ENCODE measurements at regions of chr14 and their contacts with region 1.

Region 1: GRCh38 chr14:54175298-54175942 is 218.8 kb upstream of the BMP4 start:
- DNase-seq: peak; percentile 89
- ATAC-seq: peak; percentile 78
- H3K4me3 ChIP-seq: no peak overlapping the region; a peak in 1 of 6 replicates
- H3K27ac ChIP-seq: peak overlapping the region; percentile 61
- H3K4me1 ChIP-seq: peaks cover 64% of the 10 kb centered on the region
- H3K27me3 ChIP-seq: no peaks in the 10 kb centered on the region
- CTCF ChIP-seq: peak; percentile 85
- EP300 ChIP-seq: peak in 1 of 2 experiments; percentile 59; a peak in 2 of 4 replicates
- POLR2A ChIP-seq: no peak
- RAD21 ChIP-seq: peak; percentile 85

Region 2: DNA sequence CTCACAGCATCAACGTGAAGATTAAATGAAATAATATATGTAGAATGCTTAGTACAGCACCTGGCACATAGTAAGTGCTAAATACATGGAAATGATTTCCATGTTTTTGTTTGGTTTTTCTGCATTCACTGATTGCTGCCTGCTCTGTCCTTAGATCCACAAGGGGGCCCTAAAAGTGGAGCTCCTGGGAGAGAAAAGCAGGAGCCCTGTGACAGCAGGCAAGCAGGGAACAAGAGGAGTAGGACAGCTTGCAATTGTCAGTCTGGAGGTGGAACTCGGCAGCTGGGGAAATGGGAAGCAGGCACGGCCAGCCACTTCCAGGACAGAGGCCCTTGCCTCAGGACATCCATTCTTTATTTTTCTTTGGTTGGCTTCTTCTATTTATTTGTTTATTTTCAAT is 511.7 kb before region 1 on chr14:
- CTCF ChIA-PET with region 1: interaction called, 4 read pairs
- POLR2A ChIA-PET with region 1: no interaction called
- in situ Hi-C with region 1: no loop called
- intact Hi-C with region 1: loop called (anchors 1 kb)
- DNase-seq: peak; percentile 76
- ATAC-seq: peak; percentile 99
- H3K4me3 ChIP-seq: no peak overlapping the region
- H3K27ac ChIP-seq: no peak overlapping the region
- H3K4me1 ChIP-seq: peaks cover 17% of the 10 kb centered on the region
- H3K27me3 ChIP-seq: no peaks in the 10 kb centered on the region
- CTCF ChIP-seq: peak; percentile 69
- EP300 ChIP-seq: no peak
- POLR2A ChIP-seq: no peak
- RAD21 ChIP-seq: peak; percentile 80

Region 3: GRCh38 chr14:54048311-54048710 is 127.1 kb before region 1 on chr14:
- CTCF ChIA-PET with region 1: no interaction called
- POLR2A ChIA-PET with region 1: interaction called, 6 read pairs
- in situ Hi-C with region 1: no loop called
- intact Hi-C with region 1: loop called (anchors 1 kb)
- DNase-seq: peak; percentile 15
- ATAC-seq: peak; percentile 63
- H3K4me3 ChIP-seq: no peak overlapping the region; a peak in 1 of 6 replicates
- H3K27ac ChIP-seq: peak overlapping the region; percentile 79
- H3K4me1 ChIP-seq: peaks cover 63% of the 10 kb centered on the region
- H3K27me3 ChIP-seq: no peaks in the 10 kb centered on the region
- CTCF ChIP-seq: no peak
- EP300 ChIP-seq: no peak
- POLR2A ChIP-seq: no peak
- RAD21 ChIP-seq: no peak

Region 4: GRCh38 chr14:54133896-54134295 is 41.5 kb before region 1 on chr14:
- CTCF ChIA-PET with region 1: no interaction called
- POLR2A ChIA-PET with region 1: interaction called, 22 read pairs
- in situ Hi-C with region 1: no loop called
- intact Hi-C with region 1: loop called (anchors 1 kb)
- DNase-seq: peak; percentile 96
- ATAC-seq: peak; percentile 77
- H3K4me3 ChIP-seq: peak overlapping the region; percentile 5 to 36 (median 23); a peak in 2 of 6 replicates
- H3K27ac ChIP-seq: peak overlapping the region; percentile 83
- H3K4me1 ChIP-seq: peaks cover 92% of the 10 kb centered on the region
- H3K27me3 ChIP-seq: no peaks in the 10 kb centered on the region
- CTCF ChIP-seq: no peak
- EP300 ChIP-seq: peak in 1 of 2 experiments; percentile 95; a peak in 2 of 4 replicates
- POLR2A ChIP-seq: peak in 1 of 2 experiments; percentile 55; a peak in 2 of 4 replicates
- RAD21 ChIP-seq: 0 out of 2 replicates have a peak, but pooled peaks have one; percentile 26

Region 5: GRCh38 chr14:54152351-54152750 is 23.1 kb before region 1 on chr14:
- CTCF ChIA-PET with region 1: no interaction called
- POLR2A ChIA-PET with region 1: no interaction called
- in situ Hi-C with region 1: no loop called
- intact Hi-C with region 1: no loop called
- DNase-seq: no peak
- ATAC-seq: no peak
- H3K4me3 ChIP-seq: no peak overlapping the region
- H3K27ac ChIP-seq: no peak overlapping the region
- H3K4me1 ChIP-seq: peaks cover 11% of the 10 kb centered on the region
- H3K27me3 ChIP-seq: no peaks in the 10 kb centered on the region
- CTCF ChIP-seq: no peak
- EP300 ChIP-seq: no peak
- POLR2A ChIP-seq: no peak
- RAD21 ChIP-seq: no peak

Region 6: DNA sequence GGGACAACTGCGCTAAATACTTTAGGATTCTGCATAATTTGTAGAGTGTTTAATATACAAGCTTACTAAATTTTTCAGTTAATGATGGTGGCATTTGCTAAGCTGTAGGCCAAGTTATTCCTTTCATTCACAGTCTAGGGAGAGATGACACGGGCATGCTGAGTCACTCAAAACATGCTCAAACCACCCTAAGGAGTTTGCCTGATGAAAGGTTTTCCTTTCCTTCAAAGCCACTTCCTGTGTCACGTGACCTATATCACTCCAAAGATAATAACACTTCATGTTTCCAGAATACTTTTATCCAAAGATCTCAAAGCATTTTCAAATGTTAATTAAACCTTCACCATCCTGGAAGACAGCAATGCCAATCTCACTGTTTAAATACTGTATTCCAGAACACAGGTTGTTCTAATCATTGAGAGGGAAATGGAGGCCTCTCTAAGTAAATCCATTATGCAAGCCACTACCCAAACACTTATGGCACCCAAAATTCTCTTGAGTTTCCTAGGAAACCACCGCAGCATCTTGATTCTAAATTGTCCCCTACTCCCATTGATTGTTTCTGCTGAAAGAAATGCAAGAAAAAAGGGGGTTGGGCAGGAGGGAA is 14.4 kb after region 1 on chr14:
- CTCF ChIA-PET with region 1: no interaction called
- POLR2A ChIA-PET with region 1: no interaction called
- in situ Hi-C with region 1: no loop called
- intact Hi-C with region 1: no loop called
- DNase-seq: no peak
- ATAC-seq: no peak
- H3K4me3 ChIP-seq: no peak overlapping the region
- H3K27ac ChIP-seq: no peak overlapping the region
- H3K4me1 ChIP-seq: peaks cover 20% of the 10 kb centered on the region
- H3K27me3 ChIP-seq: no peaks in the 10 kb centered on the region
- CTCF ChIP-seq: no peak
- EP300 ChIP-seq: no peak
- POLR2A ChIP-seq: no peak
- RAD21 ChIP-seq: no peak

Measured in HepG2 (cell line).